ENCODE measurements at regions of chr2 and their contacts with region 1.

Region 1: GRCh38 chr2:148926291-148926961 is 51.4 kb downstream of the KIF5C start:
- DNase-seq: peak; percentile 56 to 77 (median 67)
- ATAC-seq: peak; percentile 94
- H3K4me3 ChIP-seq: no peak overlapping the region
- H3K27ac ChIP-seq: no peak overlapping the region
- H3K4me1 ChIP-seq: peaks cover 0 to 8% of the 10 kb centered on the region in 2 experiments; a peak in 2 of 5 replicates
- H3K27me3 ChIP-seq: 0 out of 5 replicates have a peak, but pooled peaks cover 0 to 3% of the 10 kb centered on the region in 2 experiments
- CTCF ChIP-seq: peak; percentile 81 to 93 (median 88)
- EP300 ChIP-seq: no peak
- POLR2A ChIP-seq: no peak
- RAD21 ChIP-seq: peak; percentile 48 to 69

Region 2: DNA sequence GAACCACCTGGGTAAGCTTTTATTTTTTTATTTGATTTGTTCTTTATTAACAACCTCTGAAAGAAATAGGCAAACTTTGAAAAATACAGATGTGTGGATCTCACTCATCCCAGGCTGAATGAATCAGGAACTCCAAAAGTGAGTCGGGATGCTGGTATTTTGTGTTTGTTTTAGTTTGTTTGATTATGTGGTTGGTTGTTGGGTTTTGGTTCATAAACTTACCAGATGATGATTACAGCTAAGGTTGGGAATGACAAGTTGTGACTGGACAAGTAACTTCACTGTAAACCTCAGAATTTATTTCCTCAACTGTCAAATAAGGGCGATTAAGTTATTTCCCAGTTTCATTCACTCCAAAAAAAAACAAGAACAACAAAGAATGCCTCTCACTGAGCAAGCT is 131.9 kb before region 1 on chr2:
- CTCF ChIA-PET with region 1: no interaction called
- POLR2A ChIA-PET with region 1: no interaction called
- in situ Hi-C with region 1: no loop called
- intact Hi-C with region 1: no loop called
- DNase-seq: no peak
- ATAC-seq: no peak
- H3K4me3 ChIP-seq: no peak overlapping the region
- H3K27ac ChIP-seq: no peak overlapping the region
- H3K4me1 ChIP-seq: no peaks in the 10 kb centered on the region
- H3K27me3 ChIP-seq: no peaks in the 10 kb centered on the region; a peak in 1 of 5 replicates
- CTCF ChIP-seq: no peak
- EP300 ChIP-seq: no peak
- POLR2A ChIP-seq: no peak
- RAD21 ChIP-seq: no peak

Region 3: DNA sequence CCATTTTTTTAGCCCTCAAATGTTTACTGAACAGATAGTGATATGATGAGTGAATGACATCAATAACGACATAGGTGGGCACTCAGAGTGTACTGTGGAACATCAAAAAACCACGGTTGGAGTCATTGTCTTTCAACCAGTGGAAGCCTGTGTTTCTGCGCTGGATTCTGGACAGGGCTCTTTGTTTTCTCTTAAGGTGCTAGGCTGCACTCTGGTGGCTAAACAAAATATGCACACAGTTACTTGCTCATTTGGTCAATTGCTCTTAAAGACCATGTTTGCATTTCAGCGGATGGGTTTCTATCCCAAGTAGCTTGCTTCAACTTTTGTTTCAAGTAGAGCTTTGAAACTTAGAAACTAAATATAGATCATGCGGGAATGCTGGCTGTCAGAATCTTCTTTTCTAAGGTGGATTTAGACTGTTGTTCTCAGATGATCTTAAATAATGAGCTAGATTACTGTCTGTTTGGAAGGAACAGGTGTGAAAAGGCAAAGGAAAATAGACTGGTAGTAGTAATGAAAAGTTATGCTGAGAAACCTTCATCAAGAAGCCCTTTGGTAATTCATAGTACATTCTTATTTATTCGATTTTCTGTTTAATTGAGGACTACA is 63.6 kb after region 1 on chr2:
- CTCF ChIA-PET with region 1: no interaction called
- POLR2A ChIA-PET with region 1: no interaction called
- in situ Hi-C with region 1: no loop called
- intact Hi-C with region 1: loop called (anchors 1 kb)
- DNase-seq: peak; percentile 49 to 80 (median 62)
- ATAC-seq: peak; percentile 94
- H3K4me3 ChIP-seq: no peak overlapping the region
- H3K27ac ChIP-seq: no peak overlapping the region
- H3K4me1 ChIP-seq: no peaks in the 10 kb centered on the region
- H3K27me3 ChIP-seq: peaks cover 0 to 6% of the 10 kb centered on the region in 2 experiments; a peak in 1 of 5 replicates
- CTCF ChIP-seq: peak; percentile 75 to 87 (median 80)
- EP300 ChIP-seq: no peak
- POLR2A ChIP-seq: no peak
- RAD21 ChIP-seq: peak; percentile 98

Measured in K562 (cell line).